ENCODE measurements at regions of chr16 and their contacts with region 1.

Region 1: GRCh38 chr16:4402439-4403132 is 13.8 kb downstream of the CORO7 start:
- H3K4me3 ChIP-seq: no peak overlapping the region
- H3K27ac ChIP-seq: no peak overlapping the region
- H3K4me1 ChIP-seq: no peaks in the 10 kb centered on the region
- CTCF ChIP-seq: peak; percentile 98

Region 2: DNA sequence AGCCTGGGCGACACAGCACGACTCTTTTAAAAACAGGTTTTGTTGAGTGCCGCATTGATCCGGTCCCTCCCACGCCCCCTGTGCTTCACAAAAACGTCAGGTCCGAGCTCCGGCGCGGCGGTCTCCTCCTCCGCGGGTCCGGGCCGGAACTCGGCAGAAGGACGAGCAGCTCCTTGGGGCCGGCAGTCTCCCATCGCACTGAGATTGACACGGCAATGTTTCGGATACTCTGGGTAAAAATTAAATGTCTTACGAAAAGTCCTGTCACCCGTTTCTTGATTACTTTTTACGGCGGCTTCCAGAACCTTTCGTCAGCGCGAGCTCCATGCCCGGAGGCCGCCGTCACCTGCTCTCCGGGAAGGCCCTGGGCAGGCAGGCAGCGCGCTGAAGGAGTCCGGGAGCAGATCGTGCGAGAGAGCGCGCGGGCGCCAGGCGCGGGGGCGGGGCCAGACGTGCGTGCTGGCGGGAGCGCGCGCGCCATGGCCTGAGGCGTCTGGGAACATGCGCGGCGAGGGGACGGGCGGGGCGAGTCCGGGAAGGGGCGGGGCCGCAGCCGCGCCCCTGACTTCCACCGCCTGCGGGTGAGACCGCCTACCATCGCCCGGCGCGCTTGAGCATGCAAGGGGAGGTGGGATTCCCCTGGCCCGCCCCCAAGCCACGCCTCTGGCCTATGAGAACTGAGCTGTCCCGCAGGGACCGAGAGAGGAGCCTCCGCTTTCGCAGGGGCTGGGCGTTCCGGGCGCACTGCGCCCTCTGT is 149.0 kb before region 1 on chr16:
- CTCF ChIA-PET with region 1: interaction called, 14 read pairs
- POLR2A ChIA-PET with region 1: no interaction called
- H3K4me3 ChIP-seq: peak overlapping the region; percentile 52
- H3K27ac ChIP-seq: peak overlapping the region; percentile 73
- H3K4me1 ChIP-seq: no peaks in the 10 kb centered on the region
- CTCF ChIP-seq: peak; percentile 45; the same call in 1 of the 2 replicates

Region 3: DNA sequence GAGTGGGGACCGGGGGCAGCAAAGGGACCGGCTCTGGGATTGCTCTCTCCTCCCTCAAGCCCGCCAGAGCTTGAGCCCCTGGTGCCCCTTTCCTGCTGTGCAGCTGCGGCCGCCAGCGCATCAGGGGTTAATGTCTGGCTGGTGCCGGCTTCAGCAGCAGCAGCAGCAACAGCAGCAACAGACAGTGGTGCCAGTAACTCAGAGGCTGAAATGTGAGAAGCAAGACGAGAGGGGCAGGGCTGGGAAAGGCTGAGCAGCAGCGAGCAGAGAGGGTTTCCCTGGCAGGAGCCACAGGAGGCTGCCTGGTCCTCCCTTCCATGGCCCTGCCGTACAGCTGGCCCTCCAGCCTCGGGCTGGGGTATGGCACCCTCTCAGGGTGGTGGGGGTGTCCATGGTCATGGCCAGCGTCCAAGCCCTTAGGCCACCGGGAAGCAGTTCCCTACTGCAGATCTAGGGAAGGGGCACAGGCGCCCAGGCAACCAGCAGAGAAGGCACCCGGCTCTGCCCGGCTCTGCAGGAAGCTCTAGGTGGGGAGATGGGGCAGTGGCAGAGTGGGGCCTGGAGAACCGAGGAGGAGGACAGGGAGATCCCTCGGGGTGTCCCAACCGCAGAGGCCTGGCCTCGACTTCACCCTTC is 108.6 kb before region 1 on chr16:
- CTCF ChIA-PET with region 1: interaction called, 45 read pairs
- POLR2A ChIA-PET with region 1: no interaction called
- H3K4me3 ChIP-seq: no peak overlapping the region
- H3K27ac ChIP-seq: no peak overlapping the region
- H3K4me1 ChIP-seq: peaks cover 4% of the 10 kb centered on the region; the same call in 1 of the 2 replicates
- CTCF ChIP-seq: no peak

Region 4: GRCh38 chr16:4350787-4351659 is 51.6 kb before region 1 on chr16 and contains the start of gene PAM16:
- CTCF ChIA-PET with region 1: interaction called, 39 read pairs
- POLR2A ChIA-PET with region 1: interaction called, 7 read pairs
- H3K4me3 ChIP-seq: peak within 1 kb of the TSS; percentile 95
- H3K27ac ChIP-seq: peak within 1 kb of the TSS; percentile 85
- H3K4me1 ChIP-seq: peaks cover 7% of the 10 kb centered on the region; the same call in 1 of the 2 replicates
- CTCF ChIP-seq: peak; percentile 66

Region 5: DNA sequence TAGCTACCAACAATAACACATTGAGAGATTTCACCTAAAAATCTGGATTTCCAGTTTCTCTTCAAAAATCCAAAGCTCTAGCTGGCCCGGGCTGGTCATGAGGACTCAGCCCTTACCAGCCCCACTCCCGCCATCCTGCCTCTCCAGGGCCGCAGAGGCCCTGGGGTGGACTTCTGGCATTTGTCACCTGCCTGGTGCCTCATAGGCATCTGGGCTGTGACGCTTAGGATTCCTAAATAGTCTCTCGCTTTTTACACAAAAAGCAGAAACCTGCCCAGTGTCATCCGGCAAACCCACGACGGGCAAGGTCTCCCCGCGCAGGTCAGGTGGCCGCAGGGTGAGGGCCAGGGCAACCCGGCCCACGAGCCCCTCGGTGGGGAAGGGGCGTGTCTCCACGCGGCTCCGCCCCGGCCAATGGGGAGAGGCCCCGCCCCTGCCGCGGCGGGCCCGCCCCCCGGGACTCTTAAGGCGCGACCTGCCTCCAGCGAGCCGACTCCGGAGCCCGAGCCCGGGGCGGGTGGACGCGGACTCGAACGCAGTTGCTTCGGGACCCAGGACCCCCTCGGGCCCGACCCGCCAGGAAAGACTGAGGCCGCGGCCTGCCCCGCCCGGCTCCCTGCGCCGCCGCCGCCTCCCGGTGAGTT is 31.1 kb before region 1 on chr16 and contains the start of gene VASN:
- CTCF ChIA-PET with region 1: interaction called, 32 read pairs
- POLR2A ChIA-PET with region 1: interaction called, 8 read pairs
- H3K4me3 ChIP-seq: peak within 1 kb of the TSS; percentile 45
- H3K27ac ChIP-seq: no peak within 1 kb of the TSS; the same call in 1 of the 2 replicates
- H3K4me1 ChIP-seq: peaks cover 21% of the 10 kb centered on the region
- CTCF ChIP-seq: no peak

Measured in HEK293 (cell line).